Mammary epithelial cell (primary cell): ENCODE measurements at regions of chr10 and their contacts with region 1.

Region 1: DNA sequence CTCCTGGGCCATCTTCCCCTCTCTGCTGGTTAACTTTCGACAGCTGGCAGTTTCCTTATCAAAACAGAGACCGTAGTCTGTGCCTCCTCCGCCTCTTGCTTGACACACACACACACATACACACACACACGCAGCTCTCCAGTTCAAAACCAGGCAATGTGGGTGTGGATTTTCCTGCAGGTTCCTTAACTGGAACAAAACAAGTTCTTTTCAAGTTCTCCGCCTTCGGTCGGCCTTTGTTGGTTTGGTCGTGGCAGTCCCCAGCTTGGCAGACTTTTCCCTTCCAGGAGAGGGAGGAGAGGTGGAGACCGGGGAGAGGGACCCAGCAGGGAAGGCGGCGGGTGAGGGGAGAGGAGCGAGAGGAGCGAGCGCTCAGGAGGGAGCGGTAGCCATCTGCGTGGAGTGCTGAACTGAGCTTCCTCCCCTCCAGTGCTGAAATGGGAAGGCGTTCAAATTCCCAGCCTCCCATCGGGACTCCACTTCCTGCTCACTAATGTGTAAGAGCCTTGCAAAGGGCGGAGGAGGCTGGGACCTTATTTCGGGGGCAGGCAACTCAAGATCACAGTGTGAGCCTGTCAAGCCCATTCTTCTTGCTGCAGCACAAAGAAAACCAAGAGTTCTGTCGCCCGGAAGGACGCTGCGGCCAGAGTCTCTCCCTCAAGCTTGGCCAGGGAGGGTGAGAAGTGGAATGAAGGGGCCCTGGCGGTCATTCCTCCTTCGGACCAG is 120.6 kb downstream of the PRPF18 start:
- DNase-seq: peak; percentile 80
- H3K4me3 ChIP-seq: peak overlapping the region; percentile 66 to 83 (median 68)
- H3K27ac ChIP-seq: peak overlapping the region; percentile 11
- H3K4me1 ChIP-seq: peaks cover 29% of the 10 kb centered on the region
- H3K27me3 ChIP-seq: no peaks in the 10 kb centered on the region
- CTCF ChIP-seq: peak in 1 of 2 donors; percentile 1

Region 2: GRCh38 chr10:12768156-12769100 is 938.9 kb before region 1 on chr10:
- CTCF ChIA-PET with region 1: no interaction called
- dilution Hi-C with region 1: no loop called
- in situ Hi-C with region 1: no loop called
- intact Hi-C with region 1: no loop called
- DNase-seq: peak; percentile 61
- H3K4me3 ChIP-seq: no peak overlapping the region
- H3K27ac ChIP-seq: no peak overlapping the region
- H3K4me1 ChIP-seq: no peaks in the 10 kb centered on the region
- H3K27me3 ChIP-seq: no peaks in the 10 kb centered on the region
- CTCF ChIP-seq: no peak

Region 3: DNA sequence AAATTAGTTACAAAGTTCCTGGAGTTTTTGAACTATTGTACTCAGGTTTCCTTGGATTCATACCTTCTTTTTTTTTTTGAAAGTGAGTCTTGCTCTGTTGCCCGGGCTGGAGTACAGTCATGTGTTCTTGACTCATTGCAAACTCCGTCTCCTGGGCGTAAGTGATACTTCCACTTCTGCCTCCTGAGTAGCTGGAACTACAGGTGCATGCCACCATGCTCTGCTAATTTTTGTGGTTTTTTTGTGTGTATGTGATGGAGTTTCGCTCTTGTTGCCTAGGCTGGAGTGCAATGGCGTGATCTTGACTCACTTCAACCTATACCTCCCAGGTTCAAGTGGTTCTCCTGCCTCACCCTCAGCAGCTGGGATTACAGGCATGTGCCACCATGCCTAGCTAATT is 523.7 kb before region 1 on chr10:
- CTCF ChIA-PET with region 1: no interaction called
- dilution Hi-C with region 1: no loop called
- in situ Hi-C with region 1: no loop called
- intact Hi-C with region 1: no loop called
- DNase-seq: no peak
- H3K4me3 ChIP-seq: no peak overlapping the region
- H3K27ac ChIP-seq: no peak overlapping the region
- H3K4me1 ChIP-seq: no peaks in the 10 kb centered on the region
- H3K27me3 ChIP-seq: no peaks in the 10 kb centered on the region
- CTCF ChIP-seq: no peak

Region 4: DNA sequence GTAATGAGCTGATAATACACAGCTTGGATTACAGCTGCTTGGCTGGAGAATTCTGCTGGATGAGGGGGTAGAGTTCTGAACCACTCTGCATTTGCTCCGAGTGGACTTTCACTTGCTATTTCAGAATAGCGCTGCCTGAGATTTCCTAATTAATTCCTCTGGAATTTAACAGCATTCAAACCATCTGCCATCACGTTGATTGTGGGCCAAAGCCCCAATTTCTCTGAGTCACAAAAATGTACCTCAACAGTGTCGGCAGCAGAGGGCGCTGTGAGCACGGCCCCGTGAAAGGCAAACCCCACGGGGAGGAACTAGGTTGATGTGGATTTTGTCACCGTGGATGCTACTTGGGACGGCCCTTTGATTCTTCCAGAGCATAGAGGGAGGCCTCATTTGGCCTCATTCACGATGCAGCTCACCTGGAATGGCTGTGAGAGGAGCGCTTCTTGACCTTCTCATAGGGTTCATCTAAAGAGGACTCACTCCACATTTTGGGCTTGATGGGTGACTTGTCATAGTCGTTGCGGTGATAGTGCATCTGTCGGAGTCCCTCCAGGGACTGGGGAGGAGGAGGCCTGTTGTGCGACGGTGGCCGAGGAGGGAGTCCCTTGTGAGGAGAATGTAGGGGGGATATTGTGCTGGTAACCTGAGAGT is 47.3 kb before region 1 on chr10:
- CTCF ChIA-PET with region 1: no interaction called
- dilution Hi-C with region 1: no loop called
- in situ Hi-C with region 1: no loop called
- intact Hi-C with region 1: loop called (anchors 1 kb)
- DNase-seq: peak; percentile 65
- H3K4me3 ChIP-seq: no peak overlapping the region
- H3K27ac ChIP-seq: peak overlapping the region; percentile 73
- H3K4me1 ChIP-seq: peaks cover 22% of the 10 kb centered on the region
- H3K27me3 ChIP-seq: no peaks in the 10 kb centered on the region
- CTCF ChIP-seq: peak; percentile 87 to 93

Region 5: GRCh38 chr10:13690281-13690825 is 17.0 kb before region 1 on chr10:
- CTCF ChIA-PET with region 1: interaction called, 3 read pairs
- dilution Hi-C with region 1: no loop called
- in situ Hi-C with region 1: no loop called
- intact Hi-C with region 1: loop called (anchors 1 kb)
- DNase-seq: peak; percentile 95
- H3K4me3 ChIP-seq: peak overlapping the region in 1 of 3 experiments; percentile 8
- H3K27ac ChIP-seq: peak overlapping the region; percentile 38
- H3K4me1 ChIP-seq: peaks cover 32% of the 10 kb centered on the region
- H3K27me3 ChIP-seq: no peaks in the 10 kb centered on the region
- CTCF ChIP-seq: peak in 1 of 2 donors; percentile 1

Region 6: DNA sequence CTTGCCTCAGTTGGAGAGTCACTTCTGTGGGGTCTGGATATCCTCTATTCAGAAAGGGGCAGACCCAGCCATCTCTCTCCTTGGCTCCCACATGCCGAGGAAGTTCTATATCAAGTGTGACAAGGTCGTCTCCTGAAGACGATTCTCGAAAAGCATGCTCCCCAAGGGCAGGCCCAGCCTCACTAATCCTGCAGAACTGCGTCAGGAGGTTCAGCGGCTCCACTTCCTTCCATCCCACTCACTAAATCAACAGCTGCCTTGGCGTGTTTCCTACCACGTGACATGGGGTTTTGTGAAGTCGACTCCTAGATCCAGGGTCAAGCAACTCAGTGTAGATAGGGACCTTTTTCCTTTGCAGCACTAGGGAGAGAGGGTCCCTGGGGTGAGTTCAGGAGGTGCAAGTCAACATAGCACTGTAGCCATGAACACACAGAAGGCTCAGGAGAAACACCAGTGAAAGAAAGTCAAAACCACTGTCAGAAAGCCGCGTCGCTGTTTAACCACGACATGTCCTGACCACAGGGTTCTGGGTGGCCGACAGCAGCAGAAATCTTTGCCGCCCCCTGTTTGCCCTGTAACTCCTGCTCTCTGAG is 35.9 kb after region 1 on chr10:
- CTCF ChIA-PET with region 1: no interaction called
- dilution Hi-C with region 1: no loop called
- in situ Hi-C with region 1: no loop called
- intact Hi-C with region 1: loop called (anchors 5 kb)
- DNase-seq: no peak
- H3K4me3 ChIP-seq: no peak overlapping the region
- H3K27ac ChIP-seq: no peak overlapping the region
- H3K4me1 ChIP-seq: peaks cover 8% of the 10 kb centered on the region
- H3K27me3 ChIP-seq: no peaks in the 10 kb centered on the region
- CTCF ChIP-seq: no peak